HepG2 (cell line): ENCODE measurements at regions of chr3 and their contacts with region 1.

Region 1: GRCh38 chr3:140941434-140942220 is at the start of gene SLC25A36:
- DNase-seq: peak; percentile 99
- ATAC-seq: peak; percentile 96
- H3K4me3 ChIP-seq: peak within 1 kb of the TSS; percentile 96 to 100 (median 96)
- H3K27ac ChIP-seq: peak within 1 kb of the TSS; percentile 98
- H3K4me1 ChIP-seq: peaks cover 46% of the 10 kb centered on the region
- H3K27me3 ChIP-seq: no peaks in the 10 kb centered on the region; a peak in 1 of 5 replicates
- CTCF ChIP-seq: peak; percentile 55
- EP300 ChIP-seq: peak; percentile 12 to 62; a peak in 3 of 4 replicates
- POLR2A ChIP-seq: peak; percentile 90 to 94
- RAD21 ChIP-seq: peak; percentile 51; the same call in 1 of the 2 replicates
- total RNA-seq, gene SLC25A36: 30.6 and 34.6 TPM in 2 replicates

Region 2: DNA sequence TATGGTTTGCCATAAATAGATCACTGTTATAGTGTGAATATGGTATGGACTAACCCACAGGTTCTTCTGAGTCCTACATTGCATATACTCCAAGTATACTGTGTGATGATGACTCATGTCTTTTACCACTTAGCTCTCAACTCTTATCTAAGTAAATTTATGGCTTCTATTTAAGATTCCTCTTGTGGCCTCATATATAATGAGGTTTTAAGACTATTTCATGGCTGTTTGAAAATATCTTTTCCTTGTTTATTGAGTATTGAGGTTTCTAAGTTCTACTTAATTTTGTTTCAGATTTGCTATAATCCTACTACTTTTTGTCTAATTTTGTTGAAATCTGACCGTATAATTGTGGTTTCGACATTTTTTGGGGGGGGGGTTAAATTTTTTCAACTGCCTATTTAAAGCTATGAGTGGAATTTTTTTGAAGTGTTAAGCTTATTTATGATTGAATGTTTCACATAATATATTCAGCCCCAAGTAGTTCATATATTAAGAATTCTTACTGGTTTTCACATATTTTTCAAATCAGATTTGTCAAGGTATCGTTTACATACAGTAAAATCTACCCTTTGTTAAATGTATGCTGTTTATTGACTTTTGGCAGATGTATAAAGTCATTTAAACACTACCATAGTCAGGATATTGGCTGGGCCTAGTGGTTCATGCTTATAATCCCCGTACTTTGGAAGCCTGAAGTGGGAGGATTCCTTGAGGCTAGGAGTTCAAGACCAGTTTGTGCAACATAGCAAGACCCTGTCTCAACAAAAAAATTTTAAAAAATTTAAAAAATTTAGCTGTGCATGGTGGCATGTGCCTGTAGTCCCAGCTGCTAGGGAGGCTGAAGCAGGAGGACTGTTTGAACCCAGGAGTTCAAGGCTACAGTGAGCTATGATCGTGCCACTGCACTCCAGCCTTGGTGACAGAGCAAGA is 11.7 kb after region 1 on chr3:
- CTCF ChIA-PET with region 1: no interaction called
- POLR2A ChIA-PET with region 1: interaction called, 37 read pairs
- in situ Hi-C with region 1: no loop called
- intact Hi-C with region 1: loop called (anchors 2 kb)
- DNase-seq: no peak
- ATAC-seq: no peak
- H3K4me3 ChIP-seq: no peak overlapping the region
- H3K27ac ChIP-seq: no peak overlapping the region
- H3K4me1 ChIP-seq: peaks cover 100% of the 10 kb centered on the region
- H3K27me3 ChIP-seq: no peaks in the 10 kb centered on the region
- CTCF ChIP-seq: no peak
- EP300 ChIP-seq: no peak
- POLR2A ChIP-seq: no peak
- RAD21 ChIP-seq: no peak